Ascending aorta (tissue), 2 donors: ENCODE measurements at regions of chr15 and their contacts with region 1.

Region 1: GRCh38 chr15:90249203-90249863 is at the start of gene TTLL13:
- DNase-seq: peak; percentile 79 to 95
- H3K4me3 ChIP-seq: peak within 1 kb of the TSS; percentile 55 to 63
- H3K27ac ChIP-seq: no peak within 1 kb of the TSS
- H3K4me1 ChIP-seq: peaks cover 0 to 3% of the 10 kb centered on the region in 2 donors
- H3K27me3 ChIP-seq: no peaks in the 10 kb centered on the region
- CTCF ChIP-seq: no peak
- total RNA-seq, gene TTLL13: not detected

Region 2: GRCh38 chr15:90265271-90266060 is 16.1 kb after region 1 on chr15 and contains the start of gene NGRN:
- intact Hi-C with region 1: loop called (anchors 2 kb)
- DNase-seq: peak; percentile 68 to 95
- H3K4me3 ChIP-seq: peak within 1 kb of the TSS; percentile 62 to 71
- H3K27ac ChIP-seq: peak within 1 kb of the TSS; percentile 89 to 98
- H3K4me1 ChIP-seq: peaks cover 4 to 24% of the 10 kb centered on the region in 2 donors
- H3K27me3 ChIP-seq: no peaks in the 10 kb centered on the region
- CTCF ChIP-seq: no peak
- total RNA-seq, gene NGRN: 58.0 TPM